Activated CD4-positive, alpha-beta T cell treated with anti-CD3 and anti-CD28 coated beads, Interleukin-2, amount 10 ng/mL, durations not matched to agents 24 days and 14 days (primary cell): ENCODE measurements at regions of chr1 and their contacts with region 1.

Region 1: DNA sequence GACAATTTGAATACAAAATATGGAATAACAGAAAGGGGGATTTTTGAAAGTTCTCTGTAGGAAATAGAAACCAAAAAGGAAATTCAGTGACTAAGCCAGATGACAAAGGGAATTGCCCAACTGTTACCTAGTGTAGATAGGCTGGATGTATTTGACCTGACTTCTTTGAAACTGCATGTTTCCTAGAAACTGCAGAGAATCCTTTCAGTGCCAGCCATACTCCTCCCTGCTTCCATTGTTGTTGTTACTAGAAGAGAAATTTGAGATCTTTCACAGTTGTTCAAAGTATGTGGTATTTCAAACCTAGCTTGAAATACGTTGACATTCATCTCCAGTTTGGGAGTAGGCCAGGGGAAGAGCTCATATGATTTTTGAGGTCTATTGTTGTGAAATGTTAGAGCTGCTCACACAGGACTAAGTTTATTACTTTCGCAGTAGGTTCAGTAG is 1.8 kb upstream of the GBP5 start:
- DNase-seq: peak; percentile 85
- H3K4me3 Mint-ChIP-seq: peak overlapping the region; percentile 99
- H3K27ac Mint-ChIP-seq: peak overlapping the region; percentile 96
- H3K4me1 Mint-ChIP-seq: peaks cover 64% of the 10 kb centered on the region
- H3K27me3 Mint-ChIP-seq: no peaks in the 10 kb centered on the region

Region 2: GRCh38 chr1:89125913-89126580 is 148.4 kb before region 1 on chr1 and contains the start of gene GBP2:
- intact Hi-C with region 1: loop called (anchors 1 kb)
- DNase-seq: peak; percentile 81
- H3K4me3 Mint-ChIP-seq: peak within 1 kb of the TSS; percentile 93
- H3K27ac Mint-ChIP-seq: peak within 1 kb of the TSS; percentile 98
- H3K4me1 Mint-ChIP-seq: peaks cover 61% of the 10 kb centered on the region
- H3K27me3 Mint-ChIP-seq: no peaks in the 10 kb centered on the region
- total RNA-seq, gene GBP2: 168 and 169 TPM in 2 replicates

Region 3: GRCh38 chr1:89206373-89206772 is 68.1 kb before region 1 on chr1:
- intact Hi-C with region 1: no loop called
- DNase-seq: no peak
- H3K4me3 Mint-ChIP-seq: no peak overlapping the region
- H3K27ac Mint-ChIP-seq: no peak overlapping the region
- H3K4me1 Mint-ChIP-seq: peaks cover 10% of the 10 kb centered on the region
- H3K27me3 Mint-ChIP-seq: no peaks in the 10 kb centered on the region

Region 4: DNA sequence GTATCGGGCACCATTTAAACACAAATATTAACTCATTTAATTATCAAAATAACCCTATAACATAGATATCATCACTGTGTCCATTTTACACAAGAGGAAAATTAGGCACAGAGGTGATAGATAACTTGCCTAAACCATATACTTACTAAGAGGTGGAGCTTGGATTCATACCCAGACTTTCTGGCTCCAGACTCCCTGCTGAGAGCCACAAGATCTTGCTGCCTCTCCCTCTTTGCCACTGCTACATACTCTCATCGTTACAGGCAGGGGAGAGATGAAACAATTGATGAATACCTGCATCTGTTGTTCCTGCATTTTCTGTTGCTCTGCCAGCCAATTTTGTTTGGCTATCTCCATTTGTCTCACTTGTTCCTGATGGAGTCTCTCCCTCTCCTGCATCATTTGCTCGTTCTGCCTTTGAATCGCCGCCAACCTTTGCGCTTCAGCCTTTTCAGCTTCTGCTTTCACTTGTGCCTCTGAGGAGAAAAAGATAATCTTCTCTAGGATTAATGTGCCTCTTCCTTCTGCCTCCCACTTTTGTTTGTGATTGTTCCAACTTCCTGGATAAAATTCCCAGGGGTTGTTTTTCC is 12.4 kb before region 1 on chr1:
- intact Hi-C with region 1: loop called (anchors 1 kb)
- DNase-seq: no peak
- H3K4me3 Mint-ChIP-seq: peak overlapping the region; percentile 67
- H3K27ac Mint-ChIP-seq: peak overlapping the region; percentile 79
- H3K4me1 Mint-ChIP-seq: peaks cover 74% of the 10 kb centered on the region
- H3K27me3 Mint-ChIP-seq: no peaks in the 10 kb centered on the region

Region 5: GRCh38 chr1:89298461-89298860 is 24.0 kb after region 1 on chr1:
- intact Hi-C with region 1: loop called (anchors 1 kb)
- DNase-seq: peak; percentile 68
- H3K4me3 Mint-ChIP-seq: peak overlapping the region; percentile 28
- H3K27ac Mint-ChIP-seq: peak overlapping the region; percentile 61
- H3K4me1 Mint-ChIP-seq: peaks cover 57% of the 10 kb centered on the region
- H3K27me3 Mint-ChIP-seq: no peaks in the 10 kb centered on the region

Region 6: DNA sequence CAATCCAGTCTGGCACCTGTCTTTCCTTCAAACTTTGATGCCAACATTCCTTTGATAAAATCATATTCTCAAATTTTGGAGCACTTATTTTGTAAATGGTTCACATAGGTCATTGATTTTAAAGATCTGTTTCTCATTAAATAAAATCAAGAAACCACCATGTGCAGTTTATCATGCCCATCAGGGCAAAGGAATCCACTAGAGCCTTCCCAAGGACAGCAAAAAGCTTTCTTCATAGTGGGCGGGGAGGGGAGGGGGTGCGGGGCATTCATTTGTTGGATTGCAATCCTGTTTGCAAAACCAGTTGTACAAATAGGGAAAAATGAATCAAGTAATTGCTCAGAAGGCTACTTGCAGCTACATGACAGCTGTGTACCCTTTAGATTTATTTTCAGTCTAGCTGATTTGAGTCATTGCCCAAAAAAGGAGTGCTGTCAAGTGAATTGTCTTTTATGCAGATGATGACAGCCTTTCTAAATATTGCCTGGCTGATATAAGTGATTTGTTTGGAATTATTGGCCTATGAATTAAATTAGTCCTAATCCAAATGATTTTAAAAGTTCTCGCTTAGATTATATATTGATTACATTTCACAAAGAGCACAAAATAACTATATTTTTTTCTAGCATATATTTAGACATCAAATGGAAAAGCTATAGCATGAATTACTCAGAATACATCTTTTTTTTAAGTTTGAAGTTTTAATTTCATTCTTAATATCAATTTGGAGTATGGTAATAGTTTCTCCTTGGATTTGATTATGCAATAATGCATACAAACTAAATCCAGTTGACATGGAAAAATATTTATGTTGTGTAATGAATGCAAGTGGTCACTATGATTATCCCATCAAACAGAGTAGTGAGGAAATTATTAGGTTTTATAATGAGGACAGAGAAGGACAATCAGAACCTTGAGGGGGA is 273.4 kb after region 1 on chr1:
- intact Hi-C with region 1: loop called (anchors 10 kb)
- DNase-seq: peak; percentile 43
- H3K4me3 Mint-ChIP-seq: peak overlapping the region; percentile 28
- H3K27ac Mint-ChIP-seq: peak overlapping the region; percentile 92
- H3K4me1 Mint-ChIP-seq: peaks cover 78% of the 10 kb centered on the region
- H3K27me3 Mint-ChIP-seq: peaks cover 2% of the 10 kb centered on the region

Region 7: GRCh38 chr1:89566761-89567174 is 292.3 kb after region 1 on chr1:
- intact Hi-C with region 1: no loop called
- DNase-seq: no peak
- H3K4me3 Mint-ChIP-seq: no peak overlapping the region
- H3K27ac Mint-ChIP-seq: no peak overlapping the region
- H3K4me1 Mint-ChIP-seq: peaks cover 29% of the 10 kb centered on the region
- H3K27me3 Mint-ChIP-seq: no peaks in the 10 kb centered on the region